IMR-90 (cell line): ENCODE measurements at regions of chrX and their contacts with region 1.

Region 1: DNA sequence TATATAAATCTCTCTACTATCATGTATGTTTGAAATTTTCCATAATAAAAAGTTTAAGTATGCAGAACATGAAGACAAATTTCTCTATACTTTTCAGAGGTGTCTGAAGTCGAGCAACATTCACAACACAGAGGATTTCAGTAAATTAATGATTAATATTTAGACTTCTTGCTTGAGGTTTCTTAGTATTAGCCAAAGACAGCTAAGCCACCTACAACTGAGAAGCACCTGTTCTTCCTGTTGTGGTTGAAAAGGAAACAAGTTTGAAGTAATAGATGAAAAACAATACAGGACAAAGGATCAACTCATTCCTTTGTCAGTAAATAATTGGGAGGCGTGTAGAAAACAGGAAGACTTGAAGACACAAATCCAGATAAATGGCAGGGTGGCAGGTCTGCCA is 21.1 kb downstream of the SCML1 start:
- DNase-seq: no peak
- ATAC-seq: no peak
- H3K4me3 ChIP-seq: no peak overlapping the region
- H3K27ac ChIP-seq: no peak overlapping the region
- H3K4me1 ChIP-seq: no peaks in the 10 kb centered on the region
- H3K27me3 ChIP-seq: peaks cover 2% of the 10 kb centered on the region; the same call in 1 of the 2 replicates
- CTCF ChIP-seq: no peak
- POLR2A ChIP-seq: no peak
- RAD21 ChIP-seq: no peak

Region 2: GRCh38 chrX:16559206-16559619 is 1199.2 kb before region 1 on chrX:
- CTCF ChIA-PET with region 1: no interaction called
- POLR2A ChIA-PET with region 1: no interaction called
- dilution Hi-C with region 1: no loop called
- in situ Hi-C with region 1: no loop called
- intact Hi-C with region 1: no loop called
- DNase-seq: peak; percentile 43
- ATAC-seq: peak; percentile 56; the same call in 1 of the 2 replicates
- H3K4me3 ChIP-seq: no peak overlapping the region
- H3K27ac ChIP-seq: no peak overlapping the region
- H3K4me1 ChIP-seq: no peaks in the 10 kb centered on the region
- H3K27me3 ChIP-seq: no peaks in the 10 kb centered on the region
- CTCF ChIP-seq: no peak
- POLR2A ChIP-seq: no peak
- RAD21 ChIP-seq: no peak

Region 3: DNA sequence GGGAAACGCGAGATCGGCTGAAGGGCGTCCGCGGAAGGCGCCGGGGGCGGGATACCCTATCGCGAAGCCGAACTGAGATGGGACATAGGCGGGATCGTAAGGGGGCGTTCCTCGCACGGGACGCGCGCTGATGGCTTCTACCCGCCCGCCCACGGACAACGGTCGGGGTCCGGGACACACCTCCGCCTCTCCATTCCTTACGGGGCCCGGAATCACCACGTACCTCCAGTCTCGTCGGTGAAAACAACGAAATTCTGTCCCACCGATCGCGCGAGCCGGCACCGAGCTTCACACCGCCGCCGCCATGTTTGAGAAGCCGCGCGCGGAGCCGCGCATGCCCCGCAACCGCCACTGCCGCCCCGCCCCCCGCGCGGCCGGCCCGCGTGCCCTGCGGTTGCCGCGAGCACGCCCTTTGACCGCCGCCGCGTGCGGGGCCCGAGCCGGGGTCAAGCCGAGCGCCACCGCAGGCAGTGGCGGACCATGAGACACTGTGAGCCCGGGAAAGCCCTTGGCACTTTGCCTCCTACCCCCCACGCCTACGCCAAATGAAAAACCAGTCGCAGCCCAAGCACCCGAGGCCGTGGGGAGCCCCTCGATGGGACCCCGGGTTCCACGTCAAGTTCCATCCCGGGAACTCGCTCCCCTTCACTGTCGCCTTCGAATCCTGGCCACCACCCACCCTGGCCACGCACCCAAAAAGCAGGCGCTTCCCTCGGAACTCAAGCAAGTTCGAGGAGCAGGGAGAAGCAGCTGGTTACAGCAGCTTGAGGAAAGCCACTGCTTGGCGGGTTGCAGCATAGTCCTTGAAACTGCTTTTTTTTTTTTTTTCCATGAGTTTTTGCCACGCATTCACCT is 596.2 kb after region 1 on chrX and contains the start of gene SCML2:
- CTCF ChIA-PET with region 1: no interaction called
- POLR2A ChIA-PET with region 1: no interaction called
- dilution Hi-C with region 1: no loop called
- in situ Hi-C with region 1: loop called (anchors 25 kb)
- intact Hi-C with region 1: no loop called
- DNase-seq: peak; percentile 21
- ATAC-seq: peak; percentile 87
- H3K4me3 ChIP-seq: peak within 1 kb of the TSS; percentile 99
- H3K27ac ChIP-seq: peak within 1 kb of the TSS; percentile 61; the same call in 1 of the 2 replicates
- H3K4me1 ChIP-seq: 0 out of 2 replicates have a peak, but pooled peaks cover 1% of the 10 kb centered on the region
- H3K27me3 ChIP-seq: peaks cover 5% of the 10 kb centered on the region
- CTCF ChIP-seq: no peak
- POLR2A ChIP-seq: no peak
- RAD21 ChIP-seq: no peak
- total RNA-seq, gene SCML2: 1.3 and 1.7 TPM in 2 replicates

Region 4: GRCh38 chrX:19440713-19441112 is 1682.3 kb after region 1 on chrX:
- CTCF ChIA-PET with region 1: no interaction called
- POLR2A ChIA-PET with region 1: no interaction called
- dilution Hi-C with region 1: no loop called
- in situ Hi-C with region 1: no loop called
- intact Hi-C with region 1: loop called (anchors 10 kb)
- DNase-seq: peak; percentile 33
- ATAC-seq: no peak
- H3K4me3 ChIP-seq: no peak overlapping the region
- H3K27ac ChIP-seq: no peak overlapping the region
- H3K4me1 ChIP-seq: no peaks in the 10 kb centered on the region
- H3K27me3 ChIP-seq: no peaks in the 10 kb centered on the region
- CTCF ChIP-seq: no peak
- POLR2A ChIP-seq: no peak
- RAD21 ChIP-seq: no peak